Psoas muscle (tissue), 8 donors: ENCODE measurements at regions of chr1 and their contacts with region 1.

Region 1: GRCh38 chr1:21659099-21659923 is 9.8 kb downstream of the RAP1GAP start:
- DNase-seq: peak; percentile 63 to 78
- ATAC-seq: peak; percentile 71 to 86 (median 83)
- H3K4me3 ChIP-seq: no peak overlapping the region
- H3K27ac ChIP-seq: no peak overlapping the region
- H3K4me1 ChIP-seq: no peaks in the 10 kb centered on the region
- H3K27me3 ChIP-seq: peaks cover 0 to 50% (median 12%) of the 10 kb centered on the region in 3 donors
- CTCF ChIP-seq: peak; percentile 81

Region 2: DNA sequence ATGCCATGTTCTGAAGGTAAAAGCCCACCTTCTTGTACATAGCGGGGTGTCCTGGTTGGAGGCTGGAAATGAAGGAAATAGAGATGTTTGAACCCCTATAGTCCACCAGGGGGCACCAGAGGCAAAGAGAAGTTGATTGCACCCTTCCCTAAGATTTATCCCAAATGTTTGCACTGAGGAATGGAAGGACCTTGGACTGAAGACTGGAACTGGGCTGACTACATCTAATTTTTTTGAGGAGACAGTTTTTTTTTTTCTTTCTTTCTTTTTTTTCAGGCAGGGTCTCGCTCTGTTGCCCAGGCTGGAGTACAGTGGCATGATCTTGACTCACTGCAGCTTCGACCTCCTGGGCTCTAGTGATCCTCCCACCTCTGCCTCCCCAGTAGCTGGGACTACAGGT is 427.3 kb before region 1 on chr1:
- intact Hi-C with region 1: loop called in 1 of 2 experiments (anchors 10 kb)
- DNase-seq: no peak
- ATAC-seq: peak; percentile 52 to 83 (median 68)
- H3K4me3 ChIP-seq: no peak overlapping the region
- H3K27ac ChIP-seq: no peak overlapping the region
- H3K4me1 ChIP-seq: no peaks in the 10 kb centered on the region
- H3K27me3 ChIP-seq: no peaks in the 10 kb centered on the region
- CTCF ChIP-seq: peak; percentile 80

Region 3: DNA sequence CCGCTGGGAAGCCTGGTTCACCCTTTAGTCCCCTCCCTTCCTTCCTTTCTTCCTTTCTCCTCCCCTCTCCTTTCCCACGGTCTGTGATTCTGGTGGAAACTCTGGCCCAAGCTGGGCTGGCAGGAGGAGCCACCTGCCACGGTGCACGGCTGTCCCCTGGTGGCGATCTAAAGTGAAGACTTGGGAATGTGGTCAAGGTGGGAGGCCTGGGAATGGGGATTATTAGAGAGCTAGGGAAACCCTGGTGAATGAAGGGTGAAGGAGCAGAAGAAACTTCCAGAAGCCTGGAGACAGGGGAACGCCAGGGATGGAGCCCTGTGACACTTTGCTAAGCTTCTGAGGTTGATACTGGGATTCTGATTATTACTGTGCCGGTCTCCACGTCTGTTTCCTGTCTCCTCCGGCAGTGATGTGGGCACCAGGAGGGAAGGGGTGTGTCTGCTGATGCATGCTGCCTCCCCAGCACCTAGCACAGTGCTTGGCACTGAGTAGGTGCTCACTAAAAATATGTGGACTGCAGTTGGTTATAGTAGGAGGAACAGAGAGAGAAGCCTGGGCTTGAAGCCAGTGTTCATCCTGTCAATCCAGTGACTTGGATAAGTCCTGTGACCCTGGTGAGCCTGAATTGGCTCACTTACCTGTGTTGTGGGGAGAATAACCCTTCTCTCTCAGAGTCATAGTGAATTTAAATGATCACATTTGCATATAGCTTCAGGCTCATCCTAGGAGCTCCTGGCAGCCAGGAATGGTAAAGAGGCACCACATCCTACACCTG is 290.6 kb before region 1 on chr1:
- intact Hi-C with region 1: loop called in 1 of 2 experiments (anchors 5 kb)
- DNase-seq: peak; percentile 81 to 87
- ATAC-seq: peak; percentile 87 to 98 (median 92)
- H3K4me3 ChIP-seq: no peak overlapping the region
- H3K27ac ChIP-seq: no peak overlapping the region
- H3K4me1 ChIP-seq: no peaks in the 10 kb centered on the region
- H3K27me3 ChIP-seq: no peaks in the 10 kb centered on the region
- CTCF ChIP-seq: peak; percentile 97

Region 4: GRCh38 chr1:21508580-21509350 is 150.5 kb before region 1 on chr1:
- intact Hi-C with region 1: loop called (anchors 2 to 5 kb)
- DNase-seq: peak; percentile 72 to 78
- ATAC-seq: peak; percentile 54 to 80 (median 76)
- H3K4me3 ChIP-seq: peak overlapping the region; percentile 45
- H3K27ac ChIP-seq: no peak overlapping the region
- H3K4me1 ChIP-seq: no peaks in the 10 kb centered on the region
- H3K27me3 ChIP-seq: peaks cover 0 to 53% (median 10%) of the 10 kb centered on the region in 3 donors
- CTCF ChIP-seq: peak; percentile 59